Cardiac septum (tissue), 1 donor: ENCODE measurements at regions of chr2 and their contacts with region 1.

Region 1: DNA sequence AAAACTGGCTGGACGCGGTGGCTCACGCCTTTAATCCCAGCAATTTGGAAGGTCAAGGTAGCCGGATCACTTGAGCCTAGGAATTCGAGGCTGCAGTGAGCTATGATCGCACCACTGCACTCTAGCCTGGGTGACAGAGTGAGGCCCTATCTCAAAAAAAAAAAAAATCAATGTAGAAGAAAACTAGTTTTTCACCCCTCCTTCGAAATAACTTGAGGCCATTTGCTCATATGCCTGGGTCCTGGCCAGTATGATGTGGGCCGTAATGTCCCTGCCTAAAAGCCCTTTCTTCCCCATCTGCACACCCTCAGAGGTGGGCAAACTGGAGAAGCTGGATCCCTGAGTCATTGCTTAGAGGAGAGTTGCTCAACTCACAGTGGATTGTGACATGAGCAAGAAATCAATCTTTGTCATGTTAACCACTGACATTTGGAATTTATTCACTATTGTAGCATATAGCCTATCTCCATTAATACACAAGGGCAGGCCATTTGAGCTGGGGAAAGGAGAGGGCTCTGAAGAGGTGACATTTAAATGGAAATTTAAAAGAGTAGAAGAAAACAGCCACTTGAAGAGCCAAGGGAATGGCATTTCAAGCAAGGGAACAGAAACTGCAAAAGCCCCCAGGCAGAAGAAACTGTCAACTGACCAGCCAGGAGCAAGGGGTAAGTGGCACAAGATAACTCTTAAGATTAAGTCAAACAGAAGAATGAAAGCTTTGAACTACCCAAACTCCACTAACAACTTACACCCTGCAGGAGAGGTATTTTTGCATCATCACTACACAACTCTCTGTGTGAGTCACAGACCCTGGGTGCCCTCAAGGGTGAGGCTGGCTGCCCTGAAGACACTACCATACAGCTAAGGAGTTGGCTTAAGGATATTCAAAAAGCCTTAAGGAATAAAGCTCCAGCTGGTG is 7.6 kb upstream of the METTL21A start:
- DNase-seq: no peak

Region 2: DNA sequence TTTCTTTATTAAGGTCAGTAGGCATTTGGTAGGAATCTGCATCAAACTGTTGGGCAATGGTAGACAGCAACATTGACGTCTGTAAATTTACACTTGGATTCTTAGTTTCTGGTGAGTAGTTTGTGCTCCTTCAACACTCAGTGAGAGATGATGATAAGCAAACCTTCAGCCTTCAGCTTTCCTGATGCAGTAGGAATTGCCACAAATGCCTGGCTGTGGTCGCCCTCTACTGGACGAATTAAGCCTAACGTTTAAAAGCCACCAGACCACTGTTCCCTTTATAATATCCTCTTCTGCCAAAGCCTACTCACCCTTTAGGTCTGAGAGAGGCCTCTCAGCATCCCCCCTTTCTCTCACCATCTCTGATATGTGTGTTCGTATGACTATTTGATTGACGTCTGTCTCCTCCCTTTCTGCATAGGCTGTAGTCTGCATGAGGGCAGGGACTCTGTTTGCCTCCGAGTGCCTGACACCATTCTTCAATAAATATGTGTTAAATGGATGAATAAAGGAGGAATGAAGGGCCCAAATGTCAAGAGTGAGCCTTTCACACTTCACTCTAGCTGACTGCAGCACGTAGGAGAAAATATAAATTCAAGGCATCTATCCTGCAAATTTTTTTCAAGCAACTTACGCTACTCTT is 439.5 kb after region 1 on chr2:
- intact Hi-C with region 1: loop called (anchors 10 kb)
- DNase-seq: no peak